ENCODE measurements at regions of chr1 and their contacts with region 1.

Region 1: GRCh38 chr1:178282949-178283367 is 189.1 kb downstream of the RASAL2 start:
- DNase-seq: no peak

Region 2: DNA sequence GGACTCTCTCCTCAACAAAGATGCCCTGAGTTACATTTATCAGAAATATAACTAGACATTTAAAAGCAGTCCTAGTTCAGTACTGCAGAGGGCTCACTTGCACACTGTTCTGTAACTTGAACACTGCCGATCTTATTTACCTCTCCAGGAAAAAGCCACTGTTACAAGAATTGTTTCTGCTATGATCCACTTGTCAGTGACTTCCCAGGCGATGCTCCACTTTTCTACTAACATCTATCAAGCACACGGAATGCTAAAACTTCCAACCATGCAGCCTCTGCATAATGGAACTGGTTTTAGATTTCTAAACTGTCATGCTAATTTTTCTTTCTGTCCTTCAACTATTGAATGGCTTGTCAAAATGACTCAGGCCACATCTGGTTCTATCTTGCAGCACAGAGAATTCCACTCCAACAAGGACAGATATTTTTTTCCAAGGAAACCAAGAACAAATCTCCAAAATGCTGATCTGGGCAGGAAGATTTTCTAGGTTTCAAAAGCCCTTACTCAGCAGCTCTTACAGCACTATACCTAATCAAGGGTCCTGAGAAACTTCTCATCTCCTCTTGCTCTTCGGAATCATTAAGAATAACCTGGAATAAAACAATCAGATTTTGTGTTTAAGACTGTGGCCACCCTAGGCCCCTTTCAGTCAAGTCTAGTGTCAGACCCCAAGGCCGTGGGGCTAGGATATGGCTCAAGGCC is 323.0 kb before region 1 on chr1:
- intact Hi-C with region 1: loop called (anchors 10 kb)
- DNase-seq: no peak

Region 3: DNA sequence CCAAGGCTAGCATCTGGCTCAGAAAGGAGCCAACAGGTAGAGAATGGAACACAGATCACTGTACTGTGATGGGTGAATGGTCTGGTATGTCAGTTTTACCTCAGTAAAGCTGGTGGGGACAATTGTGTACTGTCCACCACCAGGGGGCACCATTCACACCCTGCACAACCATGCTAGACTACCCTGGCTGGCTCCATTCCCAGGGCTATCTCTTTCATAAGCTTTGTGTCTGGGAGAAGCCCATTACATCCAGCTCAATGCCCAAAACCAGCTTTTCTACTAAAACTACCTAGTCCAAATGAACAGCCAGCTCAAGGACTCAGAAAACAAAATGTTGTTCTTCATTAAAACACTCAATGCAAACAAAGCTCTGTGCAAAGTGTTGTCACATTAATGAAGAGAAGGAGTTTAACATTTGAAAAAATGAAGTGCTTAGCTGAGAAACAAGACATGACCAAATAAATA is 251.1 kb before region 1 on chr1:
- intact Hi-C with region 1: loop called (anchors 5 kb)
- DNase-seq: peak; percentile 52 to 96 (median 80)

Region 4: GRCh38 chr1:178134061-178134460 is 148.9 kb before region 1 on chr1:
- intact Hi-C with region 1: no loop called
- DNase-seq: no peak

Region 5: GRCh38 chr1:178629252-178630154 is 346.5 kb after region 1 on chr1:
- intact Hi-C with region 1: no loop called
- DNase-seq: no peak

Measured in posterior cingulate gyrus (tissue), 11 donors.